PC-9 (cell line): ENCODE measurements at regions of chr20 and their contacts with region 1.

Region 1: GRCh38 chr20:47464380-47465101 is 37.1 kb upstream of the NCOA3 start:
- DNase-seq: peak; percentile 79 to 99
- H3K4me3 ChIP-seq: no peak overlapping the region; the same call in 1 of the 2 replicates
- H3K27ac ChIP-seq: peak overlapping the region; percentile 73
- H3K4me1 ChIP-seq: peaks cover 29% of the 10 kb centered on the region
- H3K27me3 ChIP-seq: no peaks in the 10 kb centered on the region
- CTCF ChIP-seq: peak; percentile 78

Region 2: DNA sequence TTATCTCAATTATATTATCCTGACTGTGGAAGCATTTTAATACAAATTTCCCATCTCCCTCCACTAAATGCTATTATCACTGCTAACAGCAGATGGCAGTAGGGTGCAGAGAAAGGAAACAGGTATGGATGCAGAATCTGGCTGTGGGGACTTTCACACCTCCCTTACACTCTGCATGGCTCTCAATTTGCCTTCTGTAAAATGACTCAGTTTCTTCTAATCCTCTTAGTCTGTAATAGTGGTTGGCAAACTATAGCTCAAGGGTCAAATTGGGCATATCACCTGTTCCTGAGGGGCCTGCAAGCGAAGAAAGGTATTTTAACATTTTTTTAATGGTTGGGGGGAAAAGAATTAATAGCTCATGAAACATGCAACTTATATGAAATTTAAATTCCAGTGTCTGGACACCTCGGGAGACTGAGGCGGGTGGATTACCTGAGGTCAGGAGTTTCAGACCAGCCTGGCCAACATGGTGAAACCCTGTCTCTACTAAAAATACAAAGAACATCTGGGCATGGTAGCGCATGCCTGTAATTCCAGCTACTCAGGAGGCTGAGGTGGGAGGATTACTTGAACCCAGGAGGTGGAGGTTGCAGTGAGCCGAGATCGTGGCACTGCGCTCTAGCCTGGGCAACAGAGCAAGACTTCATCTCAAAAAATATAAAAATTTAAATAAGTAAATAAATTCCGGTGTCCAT is 191.5 kb before region 1 on chr20:
- CTCF ChIA-PET with region 1: interaction called, 6 read pairs
- POLR2A ChIA-PET with region 1: no interaction called
- intact Hi-C with region 1: loop called (anchors 1 kb)
- DNase-seq: peak; percentile 53 to 58
- H3K4me3 ChIP-seq: no peak overlapping the region
- H3K27ac ChIP-seq: no peak overlapping the region
- H3K4me1 ChIP-seq: peaks cover 40% of the 10 kb centered on the region
- H3K27me3 ChIP-seq: no peaks in the 10 kb centered on the region
- CTCF ChIP-seq: peak; percentile 97

Region 3: DNA sequence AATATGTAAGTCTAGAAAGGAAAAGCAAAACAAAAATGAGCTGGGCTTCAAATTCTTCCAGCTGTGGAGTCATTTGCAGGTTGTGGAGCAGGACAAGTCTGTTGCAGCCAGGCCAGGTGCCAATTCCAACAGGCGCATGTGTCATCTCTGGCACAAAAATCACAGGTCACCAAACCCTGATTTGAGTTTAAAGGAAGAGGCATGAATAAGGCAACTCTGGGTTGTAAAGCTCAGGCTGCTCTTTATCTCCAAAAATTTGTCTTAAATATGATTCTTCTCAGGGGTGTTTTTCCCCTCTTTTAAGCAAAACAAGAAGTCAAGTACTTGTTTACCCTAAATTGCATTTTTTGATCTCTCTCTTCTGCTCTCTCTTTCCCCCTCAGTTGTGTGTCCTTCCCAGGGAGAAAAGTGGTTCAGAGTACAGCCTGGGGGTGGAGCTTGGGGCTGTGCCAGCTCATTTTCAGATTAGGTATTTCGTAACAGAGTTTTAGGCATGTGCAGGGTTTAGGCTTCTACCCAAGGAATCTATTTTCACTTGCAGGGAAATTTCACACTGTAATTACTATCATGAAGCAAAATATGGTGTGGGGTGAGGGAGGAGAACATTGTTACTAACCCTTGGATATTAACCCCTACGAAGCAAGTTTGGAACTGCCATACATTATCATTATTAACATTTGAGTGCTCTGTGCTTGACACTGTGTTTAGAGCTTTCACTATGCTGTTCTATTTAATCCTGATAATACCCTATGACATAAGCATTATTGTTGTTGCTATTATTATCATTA is 28.8 kb after region 1 on chr20:
- CTCF ChIA-PET with region 1: interaction called, 3 read pairs
- POLR2A ChIA-PET with region 1: interaction called, 8 read pairs
- intact Hi-C with region 1: loop called (anchors 2 kb)
- DNase-seq: peak; percentile 89 to 94
- H3K4me3 ChIP-seq: peak overlapping the region; percentile 38
- H3K27ac ChIP-seq: peak overlapping the region; percentile 84
- H3K4me1 ChIP-seq: peaks cover 44% of the 10 kb centered on the region
- H3K27me3 ChIP-seq: no peaks in the 10 kb centered on the region
- CTCF ChIP-seq: no peak